SK-N-SH (cell line): ENCODE measurements at regions of chr11 and their contacts with region 1.

Region 1: DNA sequence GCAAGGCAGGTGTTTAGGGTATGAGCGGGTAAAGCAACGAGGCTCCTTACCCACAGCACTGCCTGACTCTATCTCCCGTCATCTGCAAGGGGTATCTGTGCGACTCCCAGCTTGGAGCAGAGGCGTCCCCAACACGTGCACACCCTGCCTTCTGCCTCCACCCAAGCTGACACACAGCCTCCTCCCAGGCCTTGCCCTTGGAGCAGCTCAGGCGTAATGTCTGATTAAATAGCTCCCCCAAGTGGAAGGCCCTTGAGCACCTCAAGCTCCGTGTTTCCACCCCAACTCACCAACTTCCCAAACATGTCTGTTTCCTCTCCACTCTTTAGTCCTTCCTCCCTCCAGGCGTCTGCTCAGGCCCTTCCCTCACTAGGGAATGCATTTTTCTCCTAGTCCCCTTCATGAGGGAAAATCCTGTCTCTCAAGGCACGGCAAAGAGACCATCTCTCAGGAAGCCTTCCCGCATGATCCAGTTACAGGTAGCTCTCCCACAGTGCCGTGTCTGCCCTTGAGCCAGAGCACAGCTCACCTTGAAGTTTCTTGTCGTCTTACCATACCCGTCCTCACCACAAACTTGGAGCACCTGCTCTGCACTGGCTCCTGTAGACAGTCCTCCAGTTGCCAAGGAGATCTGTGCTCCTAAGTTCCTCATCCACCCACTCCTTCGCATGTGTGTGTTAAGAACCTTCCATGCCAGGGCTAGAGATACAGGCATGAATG is 15.8 kb downstream of the CYB5R2 start:
- DNase-seq: peak; percentile 68
- H3K4me3 ChIP-seq: no peak overlapping the region
- H3K27ac ChIP-seq: no peak overlapping the region
- H3K4me1 ChIP-seq: peaks cover 0 to 40% of the 10 kb centered on the region in 2 experiments; a peak in 1 of 4 replicates
- H3K27me3 ChIP-seq: no peaks in the 10 kb centered on the region
- CTCF ChIP-seq: peak; percentile 56
- EP300 ChIP-seq: no peak
- RAD21 ChIP-seq: peak; percentile 86

Region 2: GRCh38 chr11:7538031-7538430 is 119.4 kb before region 1 on chr11:
- CTCF ChIA-PET with region 1: no interaction called
- POLR2A ChIA-PET with region 1: no interaction called
- DNase-seq: no peak
- H3K4me3 ChIP-seq: no peak overlapping the region
- H3K27ac ChIP-seq: no peak overlapping the region
- H3K4me1 ChIP-seq: peaks cover 0 to 21% of the 10 kb centered on the region in 2 experiments; a peak in 2 of 4 replicates
- H3K27me3 ChIP-seq: no peaks in the 10 kb centered on the region; the same call in 1 of the 2 replicates
- CTCF ChIP-seq: no peak
- EP300 ChIP-seq: no peak
- RAD21 ChIP-seq: no peak

Region 3: GRCh38 chr11:7564803-7565202 is 92.7 kb before region 1 on chr11:
- CTCF ChIA-PET with region 1: interaction called, 359 read pairs
- POLR2A ChIA-PET with region 1: no interaction called
- DNase-seq: no peak
- H3K4me3 ChIP-seq: no peak overlapping the region
- H3K27ac ChIP-seq: no peak overlapping the region
- H3K4me1 ChIP-seq: peaks cover 0 to 12% of the 10 kb centered on the region in 2 experiments; a peak in 2 of 4 replicates
- H3K27me3 ChIP-seq: peaks cover 17% of the 10 kb centered on the region; the same call in 1 of the 2 replicates
- CTCF ChIP-seq: no peak
- EP300 ChIP-seq: no peak
- RAD21 ChIP-seq: no peak

Region 4: DNA sequence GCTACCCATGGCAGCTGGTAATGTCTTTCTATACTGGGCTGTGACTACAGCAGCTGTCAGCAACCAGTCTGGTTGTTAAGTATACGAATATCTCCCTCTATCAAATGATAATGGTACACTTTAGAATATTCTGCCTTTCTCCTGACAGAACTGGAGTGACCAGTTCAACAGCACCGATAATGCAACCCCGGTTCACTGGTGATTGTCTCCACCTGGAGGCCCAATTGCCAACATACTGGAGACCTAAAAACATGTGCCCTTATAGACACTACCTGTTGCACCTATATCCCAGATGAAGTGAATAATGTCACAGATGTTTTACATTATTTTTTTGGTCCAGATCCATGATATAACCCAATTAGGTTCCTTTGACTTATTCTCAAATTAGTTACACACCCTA is 118.2 kb after region 1 on chr11:
- CTCF ChIA-PET with region 1: no interaction called
- POLR2A ChIA-PET with region 1: no interaction called
- DNase-seq: no peak
- H3K4me3 ChIP-seq: no peak overlapping the region
- H3K27ac ChIP-seq: no peak overlapping the region
- H3K4me1 ChIP-seq: no peaks in the 10 kb centered on the region
- H3K27me3 ChIP-seq: no peaks in the 10 kb centered on the region
- CTCF ChIP-seq: no peak
- EP300 ChIP-seq: no peak
- RAD21 ChIP-seq: no peak